ENCODE measurements at regions of chr22 and their contacts with region 1.

Region 1: DNA sequence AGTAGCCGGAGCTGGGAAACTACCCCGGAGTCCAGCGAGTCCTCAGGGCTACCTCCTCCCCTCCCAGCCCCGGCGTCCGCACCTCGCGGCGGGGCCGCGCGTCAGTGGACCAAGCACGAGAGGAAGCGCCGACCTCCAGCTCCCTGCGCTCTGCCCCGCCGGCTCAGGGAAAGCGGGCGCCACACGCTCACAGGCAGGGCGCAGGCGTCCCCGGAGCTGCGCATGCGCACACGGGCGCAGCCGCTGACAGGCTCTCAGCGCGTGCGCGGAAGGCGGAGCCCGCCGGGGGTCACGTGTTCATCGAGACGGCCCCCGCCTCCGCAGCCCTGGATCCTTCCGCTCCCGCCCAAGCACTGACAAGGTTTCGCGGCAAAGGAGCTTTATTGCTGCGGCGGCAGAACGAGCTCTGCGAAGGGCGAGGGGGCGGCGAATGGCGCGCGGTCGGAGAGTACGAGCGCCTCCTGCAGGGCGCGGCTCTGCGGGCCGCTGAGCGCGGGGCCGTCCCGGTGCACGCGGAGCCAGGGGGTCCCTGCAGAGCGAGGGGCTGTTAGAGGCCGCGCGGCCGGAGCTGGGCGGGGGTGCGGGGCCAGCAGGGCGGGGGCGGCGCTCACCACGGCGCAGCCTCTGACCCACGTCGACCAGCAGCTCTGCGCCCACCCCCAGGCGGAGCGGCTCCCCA is at the start of gene SCO2:
- DNase-seq: peak; percentile 98
- H3K4me3 ChIP-seq: peak within 1 kb of the TSS; percentile 65
- H3K27ac ChIP-seq: peak within 1 kb of the TSS; percentile 90
- H3K4me1 ChIP-seq: peaks cover 23% of the 10 kb centered on the region
- H3K27me3 ChIP-seq: peaks cover 10% of the 10 kb centered on the region
- CTCF ChIP-seq: peak; percentile 64
- total RNA-seq, gene SCO2: 0.44 and 5.4 TPM in 2 replicates

Region 2: GRCh38 chr22:50459496-50460140 is 65.9 kb before region 1 on chr22:
- CTCF ChIA-PET with region 1: no interaction called
- POLR2A ChIA-PET with region 1: no interaction called
- intact Hi-C with region 1: no loop called
- DNase-seq: no peak
- H3K4me3 ChIP-seq: no peak overlapping the region
- H3K27ac ChIP-seq: no peak overlapping the region
- H3K4me1 ChIP-seq: no peaks in the 10 kb centered on the region
- H3K27me3 ChIP-seq: no peaks in the 10 kb centered on the region
- CTCF ChIP-seq: no peak

Region 3: DNA sequence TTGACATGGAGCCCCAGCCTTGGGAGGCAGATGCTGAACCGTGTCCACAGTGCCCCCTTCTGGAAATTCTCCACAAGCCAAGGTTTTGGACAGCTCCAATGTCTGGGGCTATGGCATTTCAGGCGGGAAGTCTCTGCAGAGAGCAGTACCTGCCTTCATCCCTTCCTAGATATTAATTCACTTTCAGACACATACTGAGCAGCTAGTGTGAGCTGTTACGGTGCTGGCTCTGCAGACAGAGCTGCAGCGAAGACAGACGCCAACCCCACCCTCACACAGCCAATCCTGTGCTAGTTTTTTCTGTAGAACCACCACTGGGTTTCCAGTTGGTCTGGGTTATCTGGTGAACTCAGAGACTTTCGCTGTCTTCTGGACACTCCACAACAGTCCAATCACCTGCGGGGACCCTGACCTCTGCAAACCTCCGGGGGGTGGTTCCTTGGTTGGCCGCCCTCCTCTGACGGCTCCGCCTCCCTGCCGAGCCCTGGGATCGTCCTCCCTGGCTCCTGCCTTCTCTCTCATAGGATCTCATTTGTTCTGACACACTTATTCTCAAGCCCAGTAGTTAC is 27.1 kb before region 1 on chr22:
- CTCF ChIA-PET with region 1: interaction called, 14 read pairs
- POLR2A ChIA-PET with region 1: no interaction called
- intact Hi-C with region 1: no loop called
- DNase-seq: peak; percentile 80
- H3K4me3 ChIP-seq: peak overlapping the region; percentile 31
- H3K27ac ChIP-seq: peak overlapping the region; percentile 17
- H3K4me1 ChIP-seq: peaks cover 5% of the 10 kb centered on the region
- H3K27me3 ChIP-seq: no peaks in the 10 kb centered on the region
- CTCF ChIP-seq: peak; percentile 83

Region 4: DNA sequence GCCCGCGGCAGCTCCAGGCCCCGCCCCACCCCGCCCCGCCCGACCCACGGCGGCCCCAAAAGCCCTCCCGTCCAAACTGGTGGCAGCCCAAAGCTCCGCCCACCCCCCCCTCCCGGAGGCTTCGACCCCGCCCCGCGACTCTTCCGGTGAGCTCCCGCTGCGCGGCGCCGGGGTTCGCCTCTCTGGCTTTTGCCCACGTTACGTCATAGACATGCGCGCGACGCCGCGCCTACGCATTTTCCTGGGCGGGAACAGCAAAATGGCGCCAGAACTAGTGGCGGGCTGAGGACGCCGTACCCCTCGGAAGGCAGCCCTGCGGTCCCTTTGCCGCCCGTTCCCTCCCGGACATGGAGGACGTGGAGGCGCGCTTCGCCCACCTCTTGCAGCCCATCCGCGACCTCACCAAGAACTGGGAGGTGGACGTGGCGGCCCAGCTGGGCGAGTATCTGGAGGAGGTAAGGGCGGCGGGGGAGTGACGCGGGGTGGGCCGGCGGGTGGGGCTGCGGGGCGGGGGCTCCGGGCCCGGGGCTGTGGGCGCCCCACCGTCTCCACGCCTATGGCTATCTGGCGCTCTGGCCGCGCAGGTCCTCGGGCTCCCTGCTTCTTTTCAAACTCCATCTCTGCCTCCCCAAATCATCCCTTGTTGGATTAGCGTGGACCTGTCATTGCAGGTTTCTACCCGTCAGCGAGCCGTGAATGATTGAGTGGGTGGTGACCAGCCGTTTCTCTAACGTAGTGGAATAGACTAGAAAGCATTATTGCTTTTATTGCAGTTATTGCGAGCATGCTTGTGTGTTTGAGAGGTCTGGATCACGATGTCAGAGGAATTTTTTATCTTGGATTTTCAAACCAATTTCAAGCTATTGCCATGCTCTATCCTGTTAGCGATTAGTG is 17.3 kb before region 1 on chr22 and contains the start of gene NCAPH2:
- CTCF ChIA-PET with region 1: interaction called, 15 read pairs
- POLR2A ChIA-PET with region 1: interaction called, 8 read pairs
- intact Hi-C with region 1: no loop called
- DNase-seq: peak; percentile 97
- H3K4me3 ChIP-seq: peak within 1 kb of the TSS; percentile 99
- H3K27ac ChIP-seq: peak within 1 kb of the TSS; percentile 95
- H3K4me1 ChIP-seq: peaks cover 18% of the 10 kb centered on the region
- H3K27me3 ChIP-seq: no peaks in the 10 kb centered on the region
- CTCF ChIP-seq: no peak
- total RNA-seq, gene NCAPH2: 135 TPM in 2 replicates

Region 5: GRCh38 chr22:50537765-50538164 is 12.2 kb after region 1 on chr22:
- CTCF ChIA-PET with region 1: interaction called, 19 read pairs
- POLR2A ChIA-PET with region 1: no interaction called
- intact Hi-C with region 1: no loop called
- DNase-seq: no peak
- H3K4me3 ChIP-seq: no peak overlapping the region
- H3K27ac ChIP-seq: no peak overlapping the region
- H3K4me1 ChIP-seq: peaks cover 20% of the 10 kb centered on the region
- H3K27me3 ChIP-seq: no peaks in the 10 kb centered on the region
- CTCF ChIP-seq: no peak

Region 6: DNA sequence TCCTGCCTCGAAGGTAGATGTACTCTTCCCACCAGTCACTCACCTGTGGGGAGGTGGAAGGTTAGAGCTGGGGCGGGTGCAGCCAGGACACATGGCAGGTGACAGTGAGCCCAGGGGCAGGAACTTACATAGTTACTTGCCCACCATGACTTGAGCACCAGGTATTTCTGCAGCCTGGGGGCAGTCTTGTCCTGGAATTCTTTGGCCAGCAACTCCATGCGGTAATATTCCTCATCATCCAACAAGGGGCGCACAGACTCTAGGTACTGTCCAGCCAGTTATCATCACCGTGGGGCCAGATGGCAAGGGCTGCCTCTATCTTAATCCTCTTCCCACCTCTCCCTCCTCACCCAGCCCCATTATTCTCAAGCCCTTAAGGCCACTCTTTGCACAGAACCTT is 50.5 kb after region 1 on chr22:
- CTCF ChIA-PET with region 1: interaction called, 20 read pairs
- POLR2A ChIA-PET with region 1: no interaction called
- intact Hi-C with region 1: no loop called
- DNase-seq: peak; percentile 44
- H3K4me3 ChIP-seq: no peak overlapping the region
- H3K27ac ChIP-seq: no peak overlapping the region
- H3K4me1 ChIP-seq: no peaks in the 10 kb centered on the region
- H3K27me3 ChIP-seq: no peaks in the 10 kb centered on the region
- CTCF ChIP-seq: peak; percentile 50

Region 7: DNA sequence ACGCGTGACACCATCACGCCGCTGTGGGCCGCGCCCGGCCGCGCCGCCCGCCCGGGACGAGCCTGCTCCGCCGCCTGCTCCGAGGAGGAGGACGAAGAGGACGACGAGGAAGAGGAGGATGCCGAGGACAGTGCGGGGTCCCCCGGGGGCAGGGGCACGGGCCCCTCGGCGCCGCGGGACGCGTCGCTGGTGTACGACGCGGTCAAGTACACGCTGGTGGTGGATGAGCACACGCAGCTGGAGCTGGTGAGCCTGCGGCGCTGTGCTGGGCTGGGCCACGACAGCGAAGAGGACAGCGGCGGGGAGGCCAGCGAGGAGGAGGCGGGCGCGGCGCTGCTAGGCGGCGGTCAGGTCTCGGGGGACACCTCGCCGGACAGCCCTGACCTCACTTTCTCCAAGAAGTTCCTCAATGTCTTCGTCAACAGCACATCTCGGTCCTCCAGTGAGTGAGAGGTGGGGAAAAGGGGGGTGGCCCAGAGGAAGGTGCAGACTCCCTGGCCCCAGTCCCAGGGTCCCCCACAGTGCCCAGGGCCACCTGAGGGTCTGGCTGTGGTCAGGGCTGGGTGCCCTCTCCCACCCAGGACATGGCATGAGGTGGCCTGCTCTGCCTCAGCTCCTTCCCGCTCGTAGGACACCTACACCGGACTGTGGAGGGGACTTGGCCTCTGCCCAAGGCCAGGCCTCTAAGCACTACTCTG is 79.2 kb after region 1 on chr22:
- CTCF ChIA-PET with region 1: no interaction called
- POLR2A ChIA-PET with region 1: no interaction called
- intact Hi-C with region 1: no loop called
- DNase-seq: no peak
- H3K4me3 ChIP-seq: no peak overlapping the region
- H3K27ac ChIP-seq: no peak overlapping the region
- H3K4me1 ChIP-seq: no peaks in the 10 kb centered on the region
- H3K27me3 ChIP-seq: no peaks in the 10 kb centered on the region
- CTCF ChIP-seq: no peak